Sigmoid colon (tissue), 7 donors: ENCODE measurements at regions of chr15 and their contacts with region 1.

Region 1: GRCh38 chr15:101294731-101295606 is at the start of gene SNRPA1:
- DNase-seq: peak; percentile 99
- H3K4me3 ChIP-seq: peak within 1 kb of the TSS; percentile 67 to 91 (median 80)
- H3K27ac ChIP-seq: peak within 1 kb of the TSS; percentile 90 to 95 (median 94)
- H3K4me1 ChIP-seq: peaks cover 0 to 39% (median 32%) of the 10 kb centered on the region in 4 donors
- H3K27me3 ChIP-seq: no peaks in the 10 kb centered on the region
- CTCF ChIP-seq: no peak
- EP300 ChIP-seq: no peak
- POLR2A ChIP-seq: peak; percentile 62 to 72
- total RNA-seq, gene SNRPA1: 26.0 to 40.5 (median 33.7) TPM

Region 2: DNA sequence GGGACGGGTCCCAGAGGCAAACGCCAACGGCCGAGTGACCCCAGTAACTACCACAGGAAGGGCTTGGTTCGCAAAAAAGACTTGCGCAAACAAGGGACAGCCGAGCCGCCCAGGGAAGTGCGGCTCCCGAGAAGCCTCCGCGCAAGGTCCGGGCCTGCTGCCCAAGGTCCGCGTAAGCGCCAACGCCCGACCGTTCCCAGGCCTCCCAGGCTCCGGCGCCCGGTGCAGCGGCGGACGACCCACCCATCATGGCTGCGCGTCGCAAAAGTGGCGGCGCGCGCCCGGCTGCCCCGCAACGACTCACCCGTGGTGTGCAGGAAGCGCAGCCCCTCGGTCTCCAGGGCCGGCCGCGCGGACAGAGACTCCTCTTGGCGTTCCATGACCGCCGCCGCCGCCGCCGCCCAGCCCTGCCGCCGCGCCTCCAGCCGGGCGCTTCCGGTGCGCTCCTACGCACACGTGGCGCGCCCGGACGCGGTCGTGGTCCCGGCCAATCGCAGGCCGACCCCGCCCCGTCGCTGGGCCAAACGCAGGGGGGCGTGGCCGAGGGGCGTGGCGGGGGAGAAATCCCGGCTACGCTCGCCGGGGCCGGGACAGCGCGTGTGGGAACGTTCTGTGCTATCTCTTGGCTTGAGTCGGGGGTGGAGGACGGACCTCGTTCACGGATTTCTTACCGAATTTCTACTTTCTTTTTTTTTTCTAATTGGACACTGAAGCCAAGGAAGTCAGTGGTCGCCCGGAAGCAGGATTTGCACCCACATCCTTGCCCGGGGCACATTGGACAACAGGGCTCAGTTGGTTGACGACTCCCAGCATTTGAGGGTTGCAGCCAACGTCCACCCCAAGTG is 17.7 kb before region 1 on chr15 and contains the start of gene SELENOS:
- intact Hi-C with region 1: loop called (anchors 2 kb)
- DNase-seq: peak; percentile 96
- H3K4me3 ChIP-seq: peak within 1 kb of the TSS; percentile 86 to 95 (median 88)
- H3K27ac ChIP-seq: peak within 1 kb of the TSS; percentile 88 to 97 (median 92)
- H3K4me1 ChIP-seq: peaks cover 0 to 22% (median 21%) of the 10 kb centered on the region in 4 donors
- H3K27me3 ChIP-seq: no peaks in the 10 kb centered on the region
- CTCF ChIP-seq: no peak
- EP300 ChIP-seq: peak in 1 of 4 donors; percentile 73
- POLR2A ChIP-seq: peak; percentile 41 to 46
- total RNA-seq, gene SELENOS: 39.3 to 62.1 (median 44.1) TPM

Region 3: GRCh38 chr15:101407439-101407838 is 112.5 kb after region 1 on chr15:
- intact Hi-C with region 1: no loop called
- DNase-seq: no peak
- H3K4me3 ChIP-seq: no peak overlapping the region
- H3K27ac ChIP-seq: no peak overlapping the region
- H3K4me1 ChIP-seq: no peaks in the 10 kb centered on the region
- H3K27me3 ChIP-seq: no peaks in the 10 kb centered on the region
- CTCF ChIP-seq: no peak
- EP300 ChIP-seq: no peak
- POLR2A ChIP-seq: no peak

Region 4: DNA sequence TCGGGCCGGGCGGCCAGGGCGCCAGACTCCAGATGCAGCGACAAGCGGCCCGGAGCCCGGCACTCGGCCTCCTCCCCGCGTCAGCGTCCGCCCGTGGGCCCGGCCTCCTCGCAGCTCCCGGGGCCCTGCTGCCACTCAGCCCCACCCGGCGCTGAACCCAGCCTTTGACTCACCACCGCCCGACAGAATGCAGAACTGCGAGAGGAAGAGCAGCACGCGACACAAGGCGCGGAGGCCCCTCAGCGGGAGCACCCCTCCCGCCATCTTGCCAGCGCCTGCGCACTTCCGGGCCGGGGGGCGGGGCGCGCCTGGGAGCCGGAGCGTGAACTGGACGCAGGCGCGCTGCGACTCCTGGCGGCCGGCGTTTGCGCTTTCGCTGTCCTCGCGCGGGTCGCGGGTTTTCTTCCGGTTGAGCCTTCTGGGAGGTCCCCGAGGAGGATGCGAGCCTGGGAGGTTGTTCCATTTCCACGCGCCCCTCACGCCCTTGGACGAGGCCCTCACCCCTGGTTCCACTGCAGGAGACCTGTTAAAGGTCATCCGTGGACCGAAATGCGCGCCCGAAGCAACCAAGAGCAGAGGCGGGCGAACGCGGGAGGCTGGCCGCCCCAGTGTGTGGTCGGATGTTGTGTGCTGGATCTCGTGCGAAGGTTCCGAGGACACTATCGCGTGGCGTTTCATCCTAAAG is 357.3 kb after region 1 on chr15 and contains the start of gene TM2D3:
- intact Hi-C with region 1: loop called (anchors 2 kb)
- DNase-seq: peak; percentile 96
- H3K4me3 ChIP-seq: peak within 1 kb of the TSS; percentile 82 to 90 (median 88)
- H3K27ac ChIP-seq: peak within 1 kb of the TSS; percentile 97 to 99 (median 98)
- H3K4me1 ChIP-seq: peaks cover 0 to 35% (median 32%) of the 10 kb centered on the region in 4 donors
- H3K27me3 ChIP-seq: no peaks in the 10 kb centered on the region
- CTCF ChIP-seq: peak; percentile 74 to 91 (median 83)
- EP300 ChIP-seq: no peak
- POLR2A ChIP-seq: peak; percentile 74 to 83
- total RNA-seq, gene TM2D3: 49.3 to 61.4 (median 56.3) TPM